HEK293 (cell line): ENCODE measurements at regions of chr18 and their contacts with region 1.

Region 1: DNA sequence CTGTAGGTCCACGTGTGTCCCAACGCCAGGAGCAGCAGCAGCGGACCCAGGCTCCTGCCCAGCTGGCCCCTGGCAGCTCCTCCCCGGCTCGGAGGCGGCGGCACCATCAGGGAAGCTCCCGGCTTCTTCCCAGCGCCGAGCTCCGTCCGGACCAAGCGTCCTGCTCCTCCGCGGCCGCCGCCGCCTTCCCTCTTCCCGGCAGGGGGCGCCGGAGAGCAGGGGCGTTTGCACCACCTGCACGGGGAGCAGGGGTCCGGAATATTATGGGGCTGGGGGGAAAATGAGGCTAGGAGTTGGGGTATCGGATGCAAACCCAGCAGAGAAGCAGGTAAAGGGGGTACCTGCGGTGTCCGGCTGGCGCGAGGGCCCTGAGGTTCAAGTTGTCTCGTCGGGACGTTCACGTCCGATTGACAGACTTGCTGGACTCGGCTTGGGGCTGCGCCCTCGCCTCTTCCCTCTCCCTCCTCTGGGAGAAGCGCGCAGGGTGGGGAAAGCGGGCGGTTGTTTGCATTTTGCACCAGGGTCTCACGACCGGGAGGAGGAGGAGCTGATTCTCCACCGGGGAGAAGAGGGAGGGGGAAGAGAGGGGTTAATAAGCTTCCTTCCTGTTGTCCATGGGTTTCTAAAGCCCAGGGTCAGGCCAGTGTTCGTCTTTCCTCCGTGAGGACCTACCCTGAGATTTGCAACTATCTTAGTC is at the start of gene CCBE1:
- H3K4me3 ChIP-seq: peak within 1 kb of the TSS; percentile 63
- H3K27ac ChIP-seq: peak within 1 kb of the TSS; percentile 64; the same call in 1 of the 2 replicates
- H3K4me1 ChIP-seq: peaks cover 9% of the 10 kb centered on the region; the same call in 1 of the 2 replicates
- CTCF ChIP-seq: peak; percentile 99

Region 2: DNA sequence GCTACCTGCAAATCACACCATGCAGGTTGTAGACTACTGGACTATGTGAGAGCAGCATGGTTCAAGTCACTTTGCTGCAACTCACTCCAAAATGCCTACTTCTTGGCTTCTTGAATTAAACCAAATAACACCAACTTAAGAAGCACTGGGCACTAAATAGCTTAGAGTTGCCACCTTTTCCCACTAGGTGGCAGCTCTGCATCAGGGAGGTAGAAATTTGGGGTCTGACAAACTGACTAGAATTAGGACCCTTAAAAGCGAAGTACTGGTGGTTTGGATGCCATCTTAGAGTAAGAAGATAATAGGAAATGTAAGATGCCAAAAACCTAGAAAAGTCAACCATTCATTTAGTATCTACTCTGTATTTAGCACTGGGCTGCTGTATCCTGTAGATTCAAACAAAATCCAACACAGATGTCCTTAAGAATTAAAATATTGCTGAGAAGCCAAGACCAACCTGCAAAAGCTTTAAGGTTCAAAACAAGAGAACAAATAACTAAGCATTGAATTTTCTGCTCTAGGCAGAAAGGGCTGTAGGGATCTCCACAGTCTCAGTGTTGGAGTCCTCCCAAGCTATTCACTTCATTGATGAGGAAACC is 65.7 kb before region 1 on chr18:
- CTCF ChIA-PET with region 1: interaction called, 29 read pairs
- POLR2A ChIA-PET with region 1: interaction called, 5 read pairs
- H3K4me3 ChIP-seq: no peak overlapping the region
- H3K27ac ChIP-seq: no peak overlapping the region
- H3K4me1 ChIP-seq: 0 out of 2 replicates have a peak, but pooled peaks cover 4% of the 10 kb centered on the region
- CTCF ChIP-seq: peak; percentile 51; the same call in 1 of the 2 replicates

Region 3: GRCh38 chr18:59660786-59661743 is 36.3 kb before region 1 on chr18:
- CTCF ChIA-PET with region 1: interaction called, 45 read pairs
- POLR2A ChIA-PET with region 1: interaction called, 4 read pairs
- H3K4me3 ChIP-seq: no peak overlapping the region
- H3K27ac ChIP-seq: no peak overlapping the region
- H3K4me1 ChIP-seq: peaks cover 12% of the 10 kb centered on the region
- CTCF ChIP-seq: no peak

Region 4: GRCh38 chr18:59681521-59682004 is 15.8 kb before region 1 on chr18:
- CTCF ChIA-PET with region 1: interaction called, 46 read pairs
- POLR2A ChIA-PET with region 1: no interaction called
- H3K4me3 ChIP-seq: no peak overlapping the region
- H3K27ac ChIP-seq: peak overlapping the region; percentile 43
- H3K4me1 ChIP-seq: peaks cover 12% of the 10 kb centered on the region
- CTCF ChIP-seq: no peak

Region 5: DNA sequence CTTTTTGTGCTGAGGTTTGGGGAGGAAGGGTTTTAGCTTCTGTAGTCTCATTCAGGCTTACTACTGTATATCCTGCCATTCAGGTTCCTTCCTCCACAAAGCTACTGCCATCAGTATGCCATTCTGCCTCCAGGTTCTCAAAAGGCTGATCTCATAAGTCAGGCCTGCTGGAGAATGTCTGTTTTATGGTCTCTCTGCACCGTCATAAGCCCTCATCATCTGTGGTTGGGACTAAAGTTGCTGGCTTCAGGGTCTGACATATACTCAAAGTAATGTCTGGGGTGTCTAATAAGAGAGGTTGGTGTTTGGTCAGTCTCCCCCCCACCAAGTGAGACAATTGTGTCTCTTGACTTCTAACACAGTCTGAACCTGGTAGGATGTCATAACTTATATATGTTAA is 36.0 kb after region 1 on chr18:
- CTCF ChIA-PET with region 1: interaction called, 13 read pairs
- POLR2A ChIA-PET with region 1: no interaction called
- H3K4me3 ChIP-seq: no peak overlapping the region
- H3K27ac ChIP-seq: no peak overlapping the region
- H3K4me1 ChIP-seq: no peaks in the 10 kb centered on the region
- CTCF ChIP-seq: no peak

Region 6: DNA sequence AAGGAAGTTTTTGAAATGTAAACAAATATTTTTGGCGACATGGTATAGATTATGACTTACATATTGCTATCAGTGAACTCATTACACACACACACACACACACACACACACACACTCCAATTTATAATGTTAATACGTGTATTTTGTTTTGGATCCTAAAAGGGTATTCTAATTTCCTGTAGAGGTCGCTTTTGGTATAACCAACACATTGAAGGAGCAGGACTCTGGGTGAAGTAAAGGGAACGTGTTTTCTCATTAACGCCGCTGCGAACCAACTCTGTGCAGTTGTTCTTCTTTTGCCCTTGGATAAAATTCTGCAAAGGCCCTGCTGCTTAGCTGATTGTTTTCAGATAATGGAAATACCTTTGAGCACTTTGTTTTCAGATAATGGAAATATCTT is 392.8 kb after region 1 on chr18:
- CTCF ChIA-PET with region 1: no interaction called
- POLR2A ChIA-PET with region 1: no interaction called
- H3K4me3 ChIP-seq: no peak overlapping the region
- H3K27ac ChIP-seq: no peak overlapping the region
- H3K4me1 ChIP-seq: no peaks in the 10 kb centered on the region
- CTCF ChIP-seq: no peak